RWPE1 (cell line): ENCODE measurements at regions of chr20 and their contacts with region 1.

Region 1: DNA sequence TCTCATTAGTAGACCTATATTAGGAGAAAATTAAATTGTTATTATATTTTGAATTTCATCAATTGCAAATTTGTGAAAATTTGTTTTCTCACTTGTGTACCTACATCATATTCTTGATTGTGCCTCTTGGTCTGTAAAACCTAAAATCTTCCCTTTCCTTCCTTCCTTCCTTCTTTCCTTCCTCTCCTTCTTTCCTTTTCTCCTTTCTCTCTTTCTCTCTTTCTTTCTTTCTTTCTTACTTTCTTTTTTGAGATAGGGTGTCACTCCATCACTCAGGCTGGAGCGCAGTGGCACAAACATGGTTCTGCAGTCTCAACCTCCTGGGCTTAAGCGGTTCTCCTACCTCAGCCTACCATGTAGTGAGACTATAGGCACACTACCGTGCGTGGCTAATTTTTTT is 19.0 kb upstream of the SALL4 start:
- DNase-seq: no peak
- H3K27ac ChIP-seq: no peak overlapping the region
- CTCF ChIP-seq: no peak

Region 2: GRCh38 chr20:52001999-52002666 is 180.8 kb after region 1 on chr20:
- CTCF ChIA-PET with region 1: interaction called, 11 read pairs
- POLR2A ChIA-PET with region 1: no interaction called
- DNase-seq: no peak
- H3K27ac ChIP-seq: no peak overlapping the region
- CTCF ChIP-seq: no peak